ENCODE measurements at regions of chr13 and their contacts with region 1.

Region 1: GRCh38 chr13:29923554-29924481 is 73.4 kb upstream of the UBL3 start:
- DNase-seq: peak; percentile 97
- H3K4me3 ChIP-seq: no peak overlapping the region
- H3K27ac ChIP-seq: peak overlapping the region; percentile 95
- H3K4me1 ChIP-seq: peaks cover 50% of the 10 kb centered on the region
- H3K27me3 ChIP-seq: no peaks in the 10 kb centered on the region
- CTCF ChIP-seq: peak; percentile 89 to 97

Region 2: GRCh38 chr13:29573190-29573589 is 350.6 kb before region 1 on chr13:
- CTCF ChIA-PET with region 1: no interaction called
- dilution Hi-C with region 1: no loop called
- in situ Hi-C with region 1: no loop called
- intact Hi-C with region 1: no loop called
- DNase-seq: no peak
- H3K4me3 ChIP-seq: no peak overlapping the region
- H3K27ac ChIP-seq: no peak overlapping the region
- H3K4me1 ChIP-seq: peaks cover 15% of the 10 kb centered on the region
- H3K27me3 ChIP-seq: no peaks in the 10 kb centered on the region
- CTCF ChIP-seq: no peak

Region 3: DNA sequence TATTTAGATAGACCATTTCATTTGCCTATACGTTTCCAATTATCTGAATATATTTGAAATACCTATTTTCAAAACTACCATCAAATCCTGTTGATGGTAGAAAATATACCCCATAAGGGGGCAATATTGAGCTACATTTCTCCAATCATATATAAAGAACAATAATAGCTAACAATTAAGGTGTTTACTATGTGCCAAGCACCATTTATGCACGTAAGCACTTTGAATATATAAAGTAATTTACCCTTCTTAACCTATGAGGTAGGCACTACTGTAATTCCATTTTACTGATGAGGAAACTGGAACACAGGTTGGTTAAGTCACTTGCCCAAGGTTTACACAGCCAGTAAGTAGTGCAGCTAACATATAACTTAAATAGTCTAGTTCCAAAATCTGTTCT is 152.6 kb before region 1 on chr13:
- CTCF ChIA-PET with region 1: interaction called, 6 read pairs
- dilution Hi-C with region 1: no loop called
- in situ Hi-C with region 1: no loop called
- intact Hi-C with region 1: loop called (anchors 2 kb)
- DNase-seq: peak; percentile 10
- H3K4me3 ChIP-seq: no peak overlapping the region
- H3K27ac ChIP-seq: no peak overlapping the region
- H3K4me1 ChIP-seq: no peaks in the 10 kb centered on the region
- H3K27me3 ChIP-seq: no peaks in the 10 kb centered on the region
- CTCF ChIP-seq: peak; percentile 26 to 41

Region 4: DNA sequence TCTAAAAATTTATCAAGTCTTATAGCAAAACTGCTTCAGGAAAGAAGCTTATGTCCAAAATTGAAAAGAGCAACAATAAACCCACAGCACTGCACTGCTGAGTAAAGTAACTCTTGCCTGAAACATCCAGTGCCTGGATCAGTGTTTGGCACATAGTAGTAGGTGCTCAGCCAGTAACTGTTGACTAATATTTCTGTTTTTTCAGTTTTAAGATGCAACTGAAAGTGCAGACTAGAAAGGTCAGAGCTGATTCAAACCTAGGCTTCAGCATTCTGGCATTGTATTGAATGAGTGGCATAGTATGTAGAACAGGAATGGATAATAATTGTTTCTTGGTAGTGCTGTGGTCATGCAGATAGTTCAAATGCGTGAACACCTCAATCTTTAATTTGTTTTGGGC is 141.0 kb before region 1 on chr13:
- CTCF ChIA-PET with region 1: no interaction called
- dilution Hi-C with region 1: no loop called
- in situ Hi-C with region 1: no loop called
- intact Hi-C with region 1: no loop called
- DNase-seq: no peak
- H3K4me3 ChIP-seq: no peak overlapping the region
- H3K27ac ChIP-seq: no peak overlapping the region
- H3K4me1 ChIP-seq: no peaks in the 10 kb centered on the region
- H3K27me3 ChIP-seq: no peaks in the 10 kb centered on the region
- CTCF ChIP-seq: no peak

Region 5: GRCh38 chr13:29902101-29902952 is 21.5 kb before region 1 on chr13:
- CTCF ChIA-PET with region 1: interaction called, 4 read pairs
- dilution Hi-C with region 1: no loop called
- in situ Hi-C with region 1: no loop called
- intact Hi-C with region 1: loop called (anchors 1 kb)
- DNase-seq: peak; percentile 92
- H3K4me3 ChIP-seq: no peak overlapping the region
- H3K27ac ChIP-seq: peak overlapping the region; percentile 30
- H3K4me1 ChIP-seq: peaks cover 20% of the 10 kb centered on the region
- H3K27me3 ChIP-seq: peaks cover 3% of the 10 kb centered on the region
- CTCF ChIP-seq: no peak

Region 6: DNA sequence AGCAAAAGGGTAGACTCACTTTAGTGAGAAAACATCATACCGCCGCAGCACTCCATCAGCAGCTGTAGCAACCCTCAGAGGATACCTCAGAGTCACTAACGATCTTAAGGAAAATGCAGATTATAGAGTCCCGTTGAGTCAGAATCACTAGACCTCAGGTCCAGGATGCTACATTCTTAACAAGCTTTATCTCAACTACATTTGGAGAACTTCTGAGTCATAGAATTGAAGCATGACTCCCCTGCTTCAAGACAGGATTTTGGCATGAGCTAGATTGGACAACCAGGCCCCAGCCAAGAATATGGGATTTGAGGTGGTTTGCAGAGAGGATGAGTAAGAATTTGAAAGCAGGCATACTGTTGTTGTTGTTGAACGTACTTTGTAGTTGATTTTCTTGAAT is 45.5 kb after region 1 on chr13:
- CTCF ChIA-PET with region 1: no interaction called
- dilution Hi-C with region 1: no loop called
- in situ Hi-C with region 1: no loop called
- intact Hi-C with region 1: no loop called
- DNase-seq: peak; percentile 10
- H3K4me3 ChIP-seq: no peak overlapping the region
- H3K27ac ChIP-seq: no peak overlapping the region
- H3K4me1 ChIP-seq: no peaks in the 10 kb centered on the region
- H3K27me3 ChIP-seq: no peaks in the 10 kb centered on the region
- CTCF ChIP-seq: no peak

Region 7: DNA sequence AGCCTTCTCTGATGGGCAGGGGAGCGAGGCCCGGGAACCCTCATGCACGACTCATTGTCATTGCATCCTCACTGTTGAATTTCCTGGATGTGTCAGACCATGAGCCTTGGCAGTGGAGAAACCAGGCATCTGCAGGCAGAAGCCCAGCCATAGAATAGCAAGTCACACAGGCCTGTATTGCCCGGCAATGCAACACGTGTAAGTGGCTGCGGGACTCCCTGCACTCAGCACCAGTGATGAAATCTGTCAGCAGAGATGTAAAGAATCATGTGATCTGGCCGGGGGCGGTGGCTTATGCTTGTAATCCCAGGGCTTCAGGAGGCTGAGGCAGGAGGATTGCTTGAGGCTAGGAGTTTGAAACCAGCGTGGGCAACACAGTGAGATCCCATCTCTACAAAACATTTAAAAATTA is 183.8 kb after region 1 on chr13:
- CTCF ChIA-PET with region 1: no interaction called
- dilution Hi-C with region 1: no loop called
- in situ Hi-C with region 1: loop called in 1 of 2 experiments (anchors 5 kb)
- intact Hi-C with region 1: no loop called
- DNase-seq: peak; percentile 79
- H3K4me3 ChIP-seq: no peak overlapping the region
- H3K27ac ChIP-seq: peak overlapping the region; percentile 55
- H3K4me1 ChIP-seq: peaks cover 15% of the 10 kb centered on the region
- H3K27me3 ChIP-seq: no peaks in the 10 kb centered on the region
- CTCF ChIP-seq: no peak

Region 8: GRCh38 chr13:30114571-30115256 is 190.9 kb after region 1 on chr13:
- CTCF ChIA-PET with region 1: interaction called, 3 read pairs
- dilution Hi-C with region 1: no loop called
- in situ Hi-C with region 1: loop called in 1 of 2 experiments (anchors 5 kb)
- intact Hi-C with region 1: loop called (anchors 1 kb)
- DNase-seq: peak; percentile 82
- H3K4me3 ChIP-seq: peak overlapping the region; percentile 23 to 66 (median 49)
- H3K27ac ChIP-seq: peak overlapping the region; percentile 49
- H3K4me1 ChIP-seq: peaks cover 19% of the 10 kb centered on the region
- H3K27me3 ChIP-seq: no peaks in the 10 kb centered on the region
- CTCF ChIP-seq: peak; percentile 79 to 93

Measured in mammary epithelial cell (primary cell).